CD8-positive, alpha-beta memory T cell (primary cell): ENCODE measurements at regions of chr9 and their contacts with region 1.

Region 1: GRCh38 chr9:19174127-19174912 is 47.0 kb upstream of the PLIN2 start:
- DNase-seq: peak in 3 of 5 donors; percentile 17 to 51 (median 40)
- H3K4me3 ChIP-seq: no peak overlapping the region
- H3K4me3 Mint-ChIP-seq: no peak overlapping the region
- H3K27ac ChIP-seq: no peak overlapping the region
- H3K27ac Mint-ChIP-seq: peak overlapping the region in 7 of 8 donors; percentile 27 to 86 (median 71)
- H3K4me1 ChIP-seq: peaks cover 13% of the 10 kb centered on the region
- H3K4me1 Mint-ChIP-seq: peaks cover 20 to 26% (median 25%) of the 10 kb centered on the region in 3 donors
- H3K27me3 ChIP-seq: no peaks in the 10 kb centered on the region
- H3K27me3 Mint-ChIP-seq: peaks cover 0 to 1% of the 10 kb centered on the region in 2 donors

Region 2: GRCh38 chr9:19048966-19049916 is 125.1 kb before region 1 on chr9 and contains the start of gene RRAGA:
- CTCF ChIA-PET with region 1: interaction called, 20 read pairs
- POLR2A ChIA-PET with region 1: interaction called, 3 read pairs
- DNase-seq: peak; percentile 93 to 95 (median 94)
- H3K4me3 ChIP-seq: peak within 1 kb of the TSS; percentile 87
- H3K4me3 Mint-ChIP-seq: peak within 1 kb of the TSS; percentile 96 to 98 (median 97)
- H3K27ac ChIP-seq: peak within 1 kb of the TSS; percentile 92
- H3K27ac Mint-ChIP-seq: peak within 1 kb of the TSS; percentile 91 to 99 (median 99)
- H3K4me1 ChIP-seq: peaks cover 38% of the 10 kb centered on the region
- H3K4me1 Mint-ChIP-seq: peaks cover 43 to 61% (median 51%) of the 10 kb centered on the region in 3 donors
- H3K27me3 ChIP-seq: no peaks in the 10 kb centered on the region
- H3K27me3 Mint-ChIP-seq: no peaks in the 10 kb centered on the region
- total RNA-seq, gene RRAGA: 53.8 to 56.9 TPM

Region 3: DNA sequence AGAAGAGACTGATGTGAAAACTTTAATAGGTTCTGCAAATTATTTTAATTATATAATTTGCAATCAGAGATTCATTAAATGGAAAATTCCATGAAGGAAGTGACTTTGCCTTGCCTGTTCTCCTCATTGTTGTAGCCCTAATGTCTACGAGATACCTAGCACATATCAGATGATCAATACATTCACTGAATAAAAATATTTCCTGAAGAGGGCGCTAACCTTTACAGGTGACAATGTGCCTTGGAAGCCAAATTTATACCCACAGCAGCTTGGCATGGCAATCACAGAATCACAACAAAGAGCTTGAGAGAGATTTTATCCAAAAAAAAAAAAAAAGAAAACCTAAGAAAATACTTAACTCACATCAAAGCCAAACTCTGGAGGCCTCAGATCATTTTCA is 89.0 kb before region 1 on chr9:
- CTCF ChIA-PET with region 1: interaction called, 33 read pairs
- POLR2A ChIA-PET with region 1: no interaction called
- DNase-seq: peak in 2 of 5 donors; percentile 32 to 48
- H3K4me3 ChIP-seq: no peak overlapping the region
- H3K4me3 Mint-ChIP-seq: no peak overlapping the region
- H3K27ac ChIP-seq: no peak overlapping the region
- H3K27ac Mint-ChIP-seq: peak overlapping the region in 5 of 8 donors; percentile 14 to 81 (median 37)
- H3K4me1 ChIP-seq: no peaks in the 10 kb centered on the region
- H3K4me1 Mint-ChIP-seq: peaks cover 0 to 9% (median 4%) of the 10 kb centered on the region in 3 donors
- H3K27me3 ChIP-seq: no peaks in the 10 kb centered on the region
- H3K27me3 Mint-ChIP-seq: no peaks in the 10 kb centered on the region

Region 4: GRCh38 chr9:19127881-19128500 is 46.3 kb before region 1 on chr9:
- CTCF ChIA-PET with region 1: interaction called, 12 read pairs
- POLR2A ChIA-PET with region 1: interaction called, 6 read pairs
- DNase-seq: peak; percentile 3 to 52 (median 25)
- H3K4me3 ChIP-seq: peak overlapping the region; percentile 57
- H3K4me3 Mint-ChIP-seq: peak overlapping the region; percentile 92 to 98 (median 95)
- H3K27ac ChIP-seq: peak overlapping the region; percentile 96
- H3K27ac Mint-ChIP-seq: peak overlapping the region; percentile 87 to 99 (median 96)
- H3K4me1 ChIP-seq: peaks cover 43% of the 10 kb centered on the region
- H3K4me1 Mint-ChIP-seq: peaks cover 42 to 64% (median 60%) of the 10 kb centered on the region in 3 donors
- H3K27me3 ChIP-seq: no peaks in the 10 kb centered on the region
- H3K27me3 Mint-ChIP-seq: no peaks in the 10 kb centered on the region

Region 5: GRCh38 chr9:19184144-19184917 is 10.0 kb after region 1 on chr9:
- CTCF ChIA-PET with region 1: interaction called, 22 read pairs
- POLR2A ChIA-PET with region 1: no interaction called
- DNase-seq: peak; percentile 68 to 91 (median 79)
- H3K4me3 ChIP-seq: no peak overlapping the region
- H3K4me3 Mint-ChIP-seq: peak overlapping the region; percentile 4 to 90 (median 73)
- H3K27ac ChIP-seq: peak overlapping the region; percentile 60
- H3K27ac Mint-ChIP-seq: peak overlapping the region; percentile 92 to 100 (median 96)
- H3K4me1 ChIP-seq: peaks cover 25% of the 10 kb centered on the region
- H3K4me1 Mint-ChIP-seq: peaks cover 30 to 38% (median 31%) of the 10 kb centered on the region in 3 donors
- H3K27me3 ChIP-seq: no peaks in the 10 kb centered on the region
- H3K27me3 Mint-ChIP-seq: no peaks in the 10 kb centered on the region

Region 6: GRCh38 chr9:19198406-19198805 is 24.1 kb after region 1 on chr9:
- CTCF ChIA-PET with region 1: no interaction called
- POLR2A ChIA-PET with region 1: no interaction called
- DNase-seq: no peak
- H3K4me3 ChIP-seq: no peak overlapping the region
- H3K4me3 Mint-ChIP-seq: no peak overlapping the region
- H3K27ac ChIP-seq: no peak overlapping the region
- H3K27ac Mint-ChIP-seq: no peak overlapping the region
- H3K4me1 ChIP-seq: no peaks in the 10 kb centered on the region
- H3K4me1 Mint-ChIP-seq: peaks cover 0 to 2% (median 0%) of the 10 kb centered on the region in 3 donors
- H3K27me3 ChIP-seq: no peaks in the 10 kb centered on the region
- H3K27me3 Mint-ChIP-seq: no peaks in the 10 kb centered on the region